GM18951 (cell line): ENCODE measurements at regions of chr5 and their contacts with region 1.

Region 1: DNA sequence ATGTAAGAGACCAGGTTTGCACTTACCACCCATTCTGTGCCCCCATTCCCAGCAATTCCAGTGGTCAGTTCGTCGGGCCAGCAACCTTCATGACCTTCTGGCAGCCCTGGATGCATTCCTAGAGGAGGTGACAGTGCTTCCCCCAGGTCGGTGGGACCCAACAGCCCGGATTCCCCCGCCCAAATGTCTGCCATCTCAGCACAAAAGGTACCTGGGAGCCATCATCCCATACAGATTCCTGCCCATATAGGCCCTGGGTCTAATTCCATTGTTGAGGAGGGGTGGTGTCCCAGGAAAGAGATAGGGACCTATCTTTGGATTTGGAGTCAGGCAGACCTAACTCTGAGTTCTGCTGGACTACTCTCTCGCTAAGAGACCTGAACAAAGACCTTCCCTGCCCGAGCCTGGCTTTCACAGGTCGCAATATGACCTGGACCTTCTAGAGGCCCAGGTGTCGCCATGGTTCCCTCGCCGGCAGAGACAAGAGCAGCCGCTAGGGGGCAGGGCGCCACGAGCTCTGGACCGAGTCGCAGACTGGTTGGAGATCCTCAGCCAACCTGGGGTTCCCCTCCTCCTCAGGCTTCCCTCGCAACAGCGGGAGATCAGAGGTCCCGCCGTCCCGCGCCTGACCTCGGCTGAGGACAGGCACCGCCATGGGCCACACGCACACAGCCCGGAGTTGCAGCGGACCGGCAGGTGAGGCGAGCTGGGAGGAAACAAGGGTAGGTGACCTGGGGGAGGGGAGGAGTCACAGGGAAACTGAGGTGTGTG is 3.1 kb downstream of the SLC4A9 start:
- POLR2A ChIP-seq: no peak

Region 2: DNA sequence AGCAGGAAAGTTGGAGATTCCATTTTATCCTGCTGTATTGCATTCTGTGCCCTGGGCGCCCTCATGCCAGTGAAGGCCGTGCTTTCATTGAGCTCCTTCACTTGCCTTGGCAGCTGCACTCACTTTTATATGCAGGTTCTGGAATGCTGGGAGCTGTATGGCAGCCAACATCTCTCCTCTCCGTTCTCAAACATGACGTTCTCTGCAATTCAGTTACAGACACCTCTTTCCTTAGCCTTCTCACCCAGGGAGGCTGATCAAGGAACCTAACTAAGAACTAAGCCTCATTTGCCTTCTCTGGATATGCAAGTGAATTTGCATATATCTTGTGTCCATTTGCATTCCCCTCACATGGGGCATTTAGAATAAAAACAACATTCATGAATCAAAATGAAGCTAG is 278.5 kb before region 1 on chr5:
- in situ Hi-C with region 1: no loop called
- POLR2A ChIP-seq: no peak

Region 3: GRCh38 chr5:140497897-140498296 is 134.9 kb after region 1 on chr5:
- in situ Hi-C with region 1: no loop called
- POLR2A ChIP-seq: no peak

Region 4: GRCh38 chr5:140710899-140711552 is 348.0 kb after region 1 on chr5:
- in situ Hi-C with region 1: loop called (anchors 10 kb)
- POLR2A ChIP-seq: no peak

Region 5: DNA sequence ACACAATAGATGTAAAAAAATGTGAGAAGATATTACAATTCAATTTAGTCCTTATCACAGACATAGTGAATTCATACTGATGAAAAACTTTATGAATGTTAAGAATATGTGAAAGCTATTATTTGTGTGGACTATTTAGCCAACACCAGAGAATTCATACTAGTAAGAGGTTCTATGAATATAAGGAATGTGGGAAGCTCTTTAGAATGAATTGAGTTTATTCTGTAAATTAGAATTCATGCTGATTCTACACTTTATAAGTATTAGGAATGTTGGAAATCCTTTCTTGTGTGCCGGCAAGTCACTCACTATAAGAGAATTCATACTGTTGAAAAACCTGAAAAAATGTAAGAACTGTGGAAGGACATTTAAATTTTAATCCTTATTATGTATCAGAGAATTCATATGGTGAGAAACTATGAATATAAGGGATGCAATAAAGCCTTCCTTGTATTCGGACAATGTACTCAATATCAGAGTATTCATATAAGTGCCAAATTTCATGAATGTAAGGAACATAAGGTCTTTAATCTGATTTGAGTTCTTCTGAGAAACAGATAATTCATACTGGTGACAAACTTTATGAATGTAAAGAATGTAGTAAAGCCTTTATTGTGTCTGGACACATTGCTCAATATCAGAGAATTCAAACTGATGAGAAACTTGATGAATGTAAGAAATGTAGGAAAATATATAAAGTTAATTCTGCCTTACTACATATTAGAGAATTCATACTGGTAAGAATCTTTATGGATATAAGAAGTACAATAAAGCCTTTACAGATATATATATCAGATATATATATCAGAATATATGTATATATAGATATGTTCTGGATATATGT is 401.4 kb after region 1 on chr5:
- in situ Hi-C with region 1: no loop called
- POLR2A ChIP-seq: no peak